ENCODE measurements at regions of chr12 and their contacts with region 1.

Region 1: GRCh38 chr12:39237004-39237403 is 205.9 kb downstream of the KIF21A start:
- DNase-seq: peak; percentile 96
- ATAC-seq: peak; percentile 84
- H3K4me3 ChIP-seq: peak overlapping the region; percentile 48; the same call in 1 of the 2 replicates
- H3K27ac ChIP-seq: peak overlapping the region; percentile 98
- H3K4me1 ChIP-seq: peaks cover 29% of the 10 kb centered on the region
- H3K27me3 ChIP-seq: no peaks in the 10 kb centered on the region
- CTCF ChIP-seq: no peak

Region 2: GRCh38 chr12:39173726-39174125 is 63.3 kb before region 1 on chr12:
- CTCF ChIA-PET with region 1: no interaction called
- POLR2A ChIA-PET with region 1: interaction called, 4 read pairs
- intact Hi-C with region 1: loop called (anchors 1 kb)
- DNase-seq: peak; percentile 80
- ATAC-seq: peak; percentile 91
- H3K4me3 ChIP-seq: peak overlapping the region; percentile 23; the same call in 1 of the 2 replicates
- H3K27ac ChIP-seq: peak overlapping the region; percentile 97
- H3K4me1 ChIP-seq: peaks cover 31% of the 10 kb centered on the region
- H3K27me3 ChIP-seq: no peaks in the 10 kb centered on the region
- CTCF ChIP-seq: no peak